ENCODE measurements at regions of chr1 and their contacts with region 1.

Region 1: GRCh38 chr1:89524369-89525168 is at the start of gene LRRC8B:
- DNase-seq: peak; percentile 91
- H3K4me3 Mint-ChIP-seq: no peak within 1 kb of the TSS
- H3K27ac Mint-ChIP-seq: no peak within 1 kb of the TSS
- H3K4me1 Mint-ChIP-seq: peaks cover 35% of the 10 kb centered on the region
- H3K27me3 Mint-ChIP-seq: no peaks in the 10 kb centered on the region
- total RNA-seq, gene LRRC8B: 48.2 and 48.7 TPM in 2 replicates

Region 2: DNA sequence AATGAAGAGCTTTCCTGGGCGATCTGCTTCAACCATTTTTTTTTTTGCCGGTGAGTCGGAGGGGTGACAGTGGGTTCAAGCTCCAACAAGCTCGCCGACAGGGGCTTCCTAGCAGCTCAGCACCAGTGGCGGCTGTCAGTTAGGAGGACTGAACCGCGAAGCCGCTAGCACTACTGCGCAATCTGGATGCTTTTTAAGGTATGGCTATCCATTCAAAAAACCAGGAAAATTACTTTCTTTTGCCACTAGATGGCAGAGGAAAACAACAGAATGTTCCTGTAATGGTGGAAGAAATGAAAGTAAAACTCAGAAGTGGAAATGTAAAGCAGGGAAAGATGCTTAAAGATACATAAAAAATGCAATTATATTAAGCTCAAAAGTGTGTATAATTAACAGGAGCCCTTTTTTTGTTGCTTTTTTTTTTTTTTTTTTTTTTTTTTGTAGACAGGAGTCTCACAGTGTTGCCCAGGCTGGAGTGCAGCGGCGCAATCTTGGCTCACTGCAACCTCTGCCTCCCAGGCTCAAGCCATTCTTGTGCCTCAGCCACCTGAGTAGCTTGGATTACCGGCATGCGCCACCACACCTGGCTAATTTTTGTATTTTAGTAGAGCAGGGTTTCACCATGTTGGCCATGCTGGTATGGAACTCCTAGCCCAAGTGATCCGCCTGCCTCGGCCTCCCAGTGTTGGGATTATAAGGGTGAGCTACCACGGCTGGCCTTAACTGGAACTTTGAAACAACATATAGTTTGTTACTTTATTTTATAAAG is 540.6 kb before region 1 on chr1:
- intact Hi-C with region 1: loop called (anchors 5 kb)
- DNase-seq: no peak
- H3K4me3 Mint-ChIP-seq: peak overlapping the region; percentile 41
- H3K27ac Mint-ChIP-seq: peak overlapping the region; percentile 44
- H3K4me1 Mint-ChIP-seq: peaks cover 73% of the 10 kb centered on the region
- H3K27me3 Mint-ChIP-seq: no peaks in the 10 kb centered on the region

Region 3: GRCh38 chr1:89538361-89538760 is 13.8 kb after region 1 on chr1:
- intact Hi-C with region 1: loop called (anchors 1 kb)
- DNase-seq: no peak
- H3K4me3 Mint-ChIP-seq: no peak overlapping the region
- H3K27ac Mint-ChIP-seq: peak overlapping the region; percentile 79
- H3K4me1 Mint-ChIP-seq: peaks cover 66% of the 10 kb centered on the region
- H3K27me3 Mint-ChIP-seq: no peaks in the 10 kb centered on the region

Region 4: DNA sequence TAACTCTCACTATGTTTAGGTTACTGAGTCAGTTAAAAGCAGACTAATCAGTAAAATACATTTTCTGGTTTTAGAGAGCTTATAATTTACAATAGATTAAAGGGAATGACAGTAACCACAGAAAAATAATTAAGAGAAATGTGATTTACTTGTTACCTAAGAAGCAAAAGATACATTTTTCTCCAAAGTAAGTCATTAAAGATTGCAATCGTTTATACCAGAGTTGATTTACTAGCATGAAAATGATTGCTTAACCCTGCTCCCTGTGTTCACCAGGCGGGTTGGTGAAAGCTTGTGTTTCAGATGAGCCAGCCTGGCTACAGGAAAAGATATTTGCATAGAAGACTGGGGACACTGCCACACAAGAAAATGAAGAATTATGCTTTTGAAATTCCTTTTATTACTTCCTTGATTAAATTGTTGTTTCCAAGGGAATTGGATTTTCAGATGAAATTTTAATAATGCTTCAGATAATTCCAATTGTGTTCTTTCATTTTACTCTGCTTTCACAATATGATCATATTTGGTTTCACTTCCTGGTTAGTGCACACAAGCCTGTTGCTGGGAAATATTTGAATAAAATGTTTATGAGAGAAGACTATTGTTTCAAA is 28.0 kb after region 1 on chr1:
- intact Hi-C with region 1: loop called (anchors 5 kb)
- DNase-seq: no peak
- H3K4me3 Mint-ChIP-seq: peak overlapping the region; percentile 38
- H3K27ac Mint-ChIP-seq: peak overlapping the region; percentile 74
- H3K4me1 Mint-ChIP-seq: peaks cover 77% of the 10 kb centered on the region
- H3K27me3 Mint-ChIP-seq: no peaks in the 10 kb centered on the region

Region 5: DNA sequence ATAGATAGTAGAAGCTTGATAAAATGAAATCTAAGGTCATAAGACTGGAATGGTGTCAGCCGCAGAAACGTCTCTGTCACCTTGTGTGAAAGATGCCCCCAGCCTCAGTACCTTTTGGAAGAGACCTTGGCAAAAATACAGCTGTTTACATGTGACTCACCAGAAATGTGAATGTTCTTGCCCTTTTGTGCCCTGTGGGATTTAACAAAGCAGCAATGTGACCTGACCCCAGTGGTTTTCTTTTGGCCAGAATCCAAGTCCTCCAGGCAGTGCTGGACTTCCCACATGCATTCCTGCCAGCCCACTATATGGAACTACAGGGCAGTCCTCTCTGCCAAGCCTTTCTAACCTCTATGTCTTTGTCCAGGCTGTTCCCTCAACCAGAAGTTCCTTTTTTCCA is 81.1 kb after region 1 on chr1:
- intact Hi-C with region 1: loop called (anchors 1 kb)
- DNase-seq: no peak
- H3K4me3 Mint-ChIP-seq: peak overlapping the region; percentile 5
- H3K27ac Mint-ChIP-seq: peak overlapping the region; percentile 99
- H3K4me1 Mint-ChIP-seq: peaks cover 90% of the 10 kb centered on the region
- H3K27me3 Mint-ChIP-seq: no peaks in the 10 kb centered on the region

Region 6: GRCh38 chr1:89780721-89781120 is 256.2 kb after region 1 on chr1:
- intact Hi-C with region 1: loop called (anchors 5 kb)
- DNase-seq: no peak
- H3K4me3 Mint-ChIP-seq: peak overlapping the region; percentile 56
- H3K27ac Mint-ChIP-seq: peak overlapping the region; percentile 96
- H3K4me1 Mint-ChIP-seq: peaks cover 38% of the 10 kb centered on the region
- H3K27me3 Mint-ChIP-seq: no peaks in the 10 kb centered on the region